Ovary (tissue), 10 donors: ENCODE measurements at regions of chr17 and their contacts with region 1.

Region 1: DNA sequence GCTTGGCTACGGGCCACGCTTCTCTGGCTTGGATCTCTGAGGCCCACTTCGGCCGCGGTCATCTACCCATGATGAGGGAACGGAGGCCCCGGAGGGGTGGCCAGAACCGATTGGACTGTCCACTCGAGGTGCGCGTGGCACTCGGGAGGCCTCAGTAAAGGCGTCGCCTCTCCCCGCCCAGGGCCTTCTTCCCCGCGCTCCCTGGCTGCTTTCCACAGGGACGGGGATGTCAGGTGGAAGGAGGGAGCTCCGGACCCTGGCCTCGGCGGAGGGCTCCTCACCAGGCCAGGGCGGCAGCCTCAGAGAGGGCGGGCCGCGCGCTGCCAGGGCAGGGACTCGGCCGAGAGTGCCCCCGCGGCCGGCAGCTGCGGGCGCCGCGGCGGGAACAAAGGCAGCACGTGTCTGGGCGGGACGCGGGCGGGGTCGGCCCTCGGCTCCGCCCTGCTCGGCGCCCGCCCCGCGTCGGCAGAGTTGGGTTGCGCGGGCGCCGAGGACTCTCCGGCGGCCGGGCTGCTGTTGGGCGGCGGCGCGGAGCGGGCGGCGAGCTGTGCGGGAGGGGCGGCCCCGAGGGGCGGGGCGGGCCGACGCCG is 587 bp upstream of the CDK5R1 start:
- DNase-seq: peak; percentile 73 to 86 (median 81)
- H3K4me3 ChIP-seq: peak overlapping the region; percentile 41
- H3K27ac ChIP-seq: peak overlapping the region; percentile 62 to 95
- H3K4me1 ChIP-seq: peaks cover 12% of the 10 kb centered on the region
- H3K27me3 ChIP-seq: no peaks in the 10 kb centered on the region
- CTCF ChIP-seq: no peak
- EP300 ChIP-seq: no peak
- POLR2A ChIP-seq: peak; percentile 41

Region 2: GRCh38 chr17:32536736-32537643 is 50.8 kb after region 1 on chr17:
- intact Hi-C with region 1: no loop called
- DNase-seq: no peak
- H3K4me3 ChIP-seq: no peak overlapping the region
- H3K27ac ChIP-seq: no peak overlapping the region
- H3K4me1 ChIP-seq: no peaks in the 10 kb centered on the region
- H3K27me3 ChIP-seq: no peaks in the 10 kb centered on the region
- CTCF ChIP-seq: no peak
- EP300 ChIP-seq: no peak
- POLR2A ChIP-seq: no peak

Region 3: DNA sequence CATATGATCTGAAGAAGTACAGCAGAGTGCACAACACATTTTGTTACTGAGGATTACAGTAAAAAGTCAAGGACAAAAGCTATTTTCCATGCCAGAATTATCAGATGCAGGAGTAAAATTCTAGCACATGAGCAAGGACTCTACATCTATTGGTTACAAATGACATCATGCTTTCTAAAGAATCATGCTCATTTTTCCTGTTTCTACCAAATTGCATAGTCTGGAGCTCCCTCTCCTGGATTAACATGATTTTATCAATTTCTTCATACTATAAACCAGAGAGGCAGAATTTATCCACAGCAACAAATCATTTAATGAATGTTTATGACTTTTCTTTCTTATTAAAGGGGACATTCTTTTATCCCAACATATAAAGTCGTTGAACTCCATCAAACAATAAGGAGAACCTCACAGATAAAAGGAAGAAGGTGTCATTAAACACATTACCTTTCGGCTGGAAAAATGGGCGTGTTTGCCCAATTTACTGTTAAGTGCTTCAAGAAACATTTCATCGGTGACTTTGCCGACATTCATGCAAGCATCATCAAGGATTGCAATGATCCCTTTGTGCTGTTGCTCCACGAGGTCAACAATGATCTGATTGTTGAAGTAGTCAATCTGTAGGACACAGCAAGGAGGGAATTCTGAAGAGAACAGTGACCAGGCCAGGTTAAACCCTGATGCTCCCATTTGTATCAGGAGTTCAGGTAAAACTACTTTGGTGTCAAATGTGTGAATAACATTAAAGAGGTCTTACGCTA is 269.0 kb after region 1 on chr17:
- intact Hi-C with region 1: loop called (anchors 5 to 10 kb)
- DNase-seq: no peak
- H3K4me3 ChIP-seq: no peak overlapping the region
- H3K27ac ChIP-seq: peak overlapping the region in 1 of 2 donors; percentile 79
- H3K4me1 ChIP-seq: peaks cover 3% of the 10 kb centered on the region
- H3K27me3 ChIP-seq: no peaks in the 10 kb centered on the region
- CTCF ChIP-seq: peak; percentile 34 to 78 (median 77)
- EP300 ChIP-seq: no peak
- POLR2A ChIP-seq: no peak

Region 4: GRCh38 chr17:32936894-32937500 is 450.8 kb after region 1 on chr17:
- intact Hi-C with region 1: loop called in 1 of 4 experiments (anchors 10 kb)
- DNase-seq: peak; percentile 89 to 93 (median 90)
- H3K4me3 ChIP-seq: no peak overlapping the region
- H3K27ac ChIP-seq: peak overlapping the region; percentile 76 to 78
- H3K4me1 ChIP-seq: peaks cover 11% of the 10 kb centered on the region
- H3K27me3 ChIP-seq: no peaks in the 10 kb centered on the region
- CTCF ChIP-seq: peak; percentile 85 to 99 (median 97)
- EP300 ChIP-seq: no peak
- POLR2A ChIP-seq: no peak